Endothelial cell of umbilical vein (primary cell): ENCODE measurements at regions of chr17 and their contacts with region 1.

Region 1: DNA sequence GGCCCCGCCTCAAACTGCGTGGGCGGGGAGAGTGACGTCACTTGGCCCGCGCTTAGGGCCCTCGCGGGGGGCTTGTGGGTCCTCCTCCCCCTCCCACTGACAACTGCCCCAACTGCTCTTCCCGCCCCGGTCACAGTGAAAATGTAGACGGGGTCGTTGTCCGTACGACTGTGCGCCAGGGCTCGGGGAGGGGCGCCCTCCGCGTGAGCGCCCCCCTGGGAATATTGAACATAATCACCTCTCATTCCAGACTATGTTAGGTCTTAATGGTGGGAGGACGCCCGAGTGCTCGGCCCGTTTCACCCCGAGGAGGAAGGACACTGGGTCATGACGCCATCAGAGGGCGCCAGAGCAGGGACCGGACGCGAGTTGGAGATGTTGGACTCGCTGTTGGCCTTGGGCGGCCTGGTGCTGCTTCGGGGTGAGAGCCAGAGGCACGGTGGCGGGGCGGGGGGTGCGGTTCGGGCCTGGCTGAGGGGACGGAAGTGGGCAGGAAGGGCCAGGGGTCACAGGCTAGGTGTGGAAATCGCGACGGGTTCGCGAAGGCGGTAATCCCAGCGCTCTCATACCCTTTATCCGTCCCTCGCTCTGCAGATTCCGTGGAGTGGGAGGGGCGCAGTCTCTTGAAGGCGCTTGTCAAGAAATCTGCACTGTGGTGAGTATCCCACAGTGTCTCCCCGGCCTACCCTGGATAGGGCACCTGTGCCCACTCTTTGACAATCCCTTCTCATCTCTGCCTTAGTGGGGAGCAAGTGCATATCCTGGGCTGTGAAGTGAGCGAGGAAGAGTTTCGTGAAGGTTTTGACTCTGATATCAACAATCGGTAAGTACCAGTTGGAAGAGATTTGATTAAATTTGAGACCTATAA is at the start of gene ELP5:
- DNase-seq: peak; percentile 99
- H3K4me3 ChIP-seq: peak within 1 kb of the TSS; percentile 57 to 87 (median 83)
- H3K27ac ChIP-seq: peak within 1 kb of the TSS; percentile 95
- H3K4me1 ChIP-seq: peaks cover 23% of the 10 kb centered on the region
- H3K27me3 ChIP-seq: no peaks in the 10 kb centered on the region
- CTCF ChIP-seq: peak in 1 of 2 donors; percentile 10
- POLR2A ChIP-seq: peak; percentile 49
- total RNA-seq, gene ELP5: 41.6 and 44.4 TPM in 2 replicates

Region 2: GRCh38 chr17:7214300-7215135 is 37.9 kb before region 1 on chr17:
- CTCF ChIA-PET with region 1: no interaction called
- POLR2A ChIA-PET with region 1: no interaction called
- dilution Hi-C with region 1: no loop called
- intact Hi-C with region 1: loop called (anchors 1 kb)
- DNase-seq: peak; percentile 99
- H3K4me3 ChIP-seq: peak overlapping the region in 2 of 3 experiments; percentile 43 to 44
- H3K27ac ChIP-seq: peak overlapping the region; percentile 63
- H3K4me1 ChIP-seq: peaks cover 33% of the 10 kb centered on the region
- H3K27me3 ChIP-seq: no peaks in the 10 kb centered on the region
- CTCF ChIP-seq: peak; percentile 48 to 74
- POLR2A ChIP-seq: no peak

Region 3: GRCh38 chr17:7239091-7240027 is 13.1 kb before region 1 on chr17 and contains the start of gene PHF23:
- CTCF ChIA-PET with region 1: interaction called, 3 read pairs
- POLR2A ChIA-PET with region 1: no interaction called
- dilution Hi-C with region 1: no loop called
- intact Hi-C with region 1: loop called (anchors 1 kb)
- DNase-seq: peak; percentile 100
- H3K4me3 ChIP-seq: peak within 1 kb of the TSS; percentile 71 to 96 (median 83)
- H3K27ac ChIP-seq: peak within 1 kb of the TSS; percentile 14
- H3K4me1 ChIP-seq: peaks cover 35% of the 10 kb centered on the region
- H3K27me3 ChIP-seq: no peaks in the 10 kb centered on the region
- CTCF ChIP-seq: no peak
- POLR2A ChIP-seq: peak; percentile 51
- total RNA-seq, gene PHF23: 54.7 and 56.2 TPM in 2 replicates

Region 4: GRCh38 chr17:7280519-7281429 is 28.4 kb after region 1 on chr17:
- CTCF ChIA-PET with region 1: no interaction called
- POLR2A ChIA-PET with region 1: no interaction called
- dilution Hi-C with region 1: no loop called
- intact Hi-C with region 1: loop called (anchors 1 kb)
- DNase-seq: peak; percentile 77
- H3K4me3 ChIP-seq: peak overlapping the region in 2 of 3 experiments; percentile 13 to 33
- H3K27ac ChIP-seq: no peak overlapping the region
- H3K4me1 ChIP-seq: peaks cover 9% of the 10 kb centered on the region
- H3K27me3 ChIP-seq: peaks cover 4 to 5% of the 10 kb centered on the region in 2 experiments
- CTCF ChIP-seq: peak; percentile 92 to 96
- POLR2A ChIP-seq: no peak